Activated CD4-positive, alpha-beta T cell treated with anti-CD3 and anti-CD28 coated beads for 36 hours (primary cell): ENCODE measurements at regions of chr11 and their contacts with region 1.

Region 1: GRCh38 chr11:62535802-62536201 is 10.8 kb downstream of the AHNAK start:
- DNase-seq: no peak
- ATAC-seq: no peak
- H3K4me3 Mint-ChIP-seq: no peak overlapping the region
- H3K27ac Mint-ChIP-seq: no peak overlapping the region
- H3K4me1 Mint-ChIP-seq: peaks cover 23% of the 10 kb centered on the region
- H3K27me3 Mint-ChIP-seq: no peaks in the 10 kb centered on the region

Region 2: GRCh38 chr11:61488651-61489291 is 1047.0 kb before region 1 on chr11:
- CTCF ChIA-PET with region 1: no interaction called
- POLR2A ChIA-PET with region 1: interaction called, 10 read pairs
- intact Hi-C with region 1: no loop called
- DNase-seq: no peak
- ATAC-seq: no peak
- H3K4me3 Mint-ChIP-seq: no peak overlapping the region
- H3K27ac Mint-ChIP-seq: no peak overlapping the region
- H3K4me1 Mint-ChIP-seq: no peaks in the 10 kb centered on the region
- H3K27me3 Mint-ChIP-seq: no peaks in the 10 kb centered on the region

Region 3: DNA sequence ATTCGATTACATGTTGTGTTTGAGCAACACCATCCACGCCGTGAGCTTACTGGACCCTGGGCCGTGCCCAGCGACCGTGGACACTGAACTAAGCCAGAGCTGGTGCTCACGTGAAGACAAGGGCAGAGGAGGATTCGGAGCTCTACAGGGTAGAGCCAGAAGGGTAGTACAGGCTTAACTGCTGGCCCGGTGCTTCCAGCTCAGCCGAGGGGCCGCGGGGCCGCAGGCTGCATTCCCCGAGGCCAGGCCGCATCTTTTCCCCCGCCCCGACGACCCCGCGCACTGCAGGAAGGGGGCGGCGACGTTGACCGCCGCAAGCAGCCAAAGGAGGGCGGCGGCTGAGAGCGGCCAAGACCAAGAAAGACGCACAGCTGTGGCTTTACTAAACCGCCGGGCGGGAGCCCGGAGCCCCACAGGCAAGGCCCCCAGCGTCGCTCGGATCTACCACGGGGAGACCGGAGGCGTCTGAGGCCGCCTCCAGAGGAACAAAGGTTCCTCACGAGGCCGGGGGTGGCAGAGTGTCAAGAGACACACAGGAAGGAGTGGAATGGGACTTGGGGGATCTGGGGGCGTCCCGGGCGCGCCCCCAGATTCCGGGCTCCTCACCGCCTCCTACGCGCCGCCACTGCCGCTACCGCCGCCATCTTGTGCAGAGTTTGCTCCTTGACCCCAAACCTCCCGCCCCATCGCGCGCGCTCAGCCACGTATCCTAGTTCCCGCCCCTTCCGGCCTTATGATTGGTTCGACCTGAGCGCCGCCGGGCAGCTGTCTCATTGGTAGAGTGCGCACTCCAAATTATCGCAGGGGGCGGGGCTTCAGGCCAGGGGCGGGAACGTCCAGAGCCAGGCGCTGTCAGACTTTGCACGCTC is 110.4 kb after region 1 on chr11 and contains the start of gene GANAB:
- CTCF ChIA-PET with region 1: no interaction called
- POLR2A ChIA-PET with region 1: no interaction called
- intact Hi-C with region 1: no loop called
- DNase-seq: peak; percentile 100
- ATAC-seq: peak; percentile 99
- H3K4me3 Mint-ChIP-seq: peak within 1 kb of the TSS; percentile 93
- H3K27ac Mint-ChIP-seq: peak within 1 kb of the TSS; percentile 93
- H3K4me1 Mint-ChIP-seq: peaks cover 34% of the 10 kb centered on the region
- H3K27me3 Mint-ChIP-seq: no peaks in the 10 kb centered on the region
- total RNA-seq, gene GANAB: 208 to 218 TPM